Adrenal gland (tissue), 19 donors: ENCODE measurements at regions of chr11 and their contacts with region 1.

Region 1: GRCh38 chr11:36265793-36266628 is 23.2 kb downstream of the COMMD9 start:
- DNase-seq: peak; percentile 36 to 80 (median 53)
- H3K4me3 ChIP-seq: no peak overlapping the region
- H3K27ac ChIP-seq: no peak overlapping the region
- H3K4me1 ChIP-seq: no peaks in the 10 kb centered on the region
- H3K27me3 ChIP-seq: no peaks in the 10 kb centered on the region
- CTCF ChIP-seq: peak; percentile 77 to 90 (median 86)
- POLR2A ChIP-seq: no peak

Region 2: DNA sequence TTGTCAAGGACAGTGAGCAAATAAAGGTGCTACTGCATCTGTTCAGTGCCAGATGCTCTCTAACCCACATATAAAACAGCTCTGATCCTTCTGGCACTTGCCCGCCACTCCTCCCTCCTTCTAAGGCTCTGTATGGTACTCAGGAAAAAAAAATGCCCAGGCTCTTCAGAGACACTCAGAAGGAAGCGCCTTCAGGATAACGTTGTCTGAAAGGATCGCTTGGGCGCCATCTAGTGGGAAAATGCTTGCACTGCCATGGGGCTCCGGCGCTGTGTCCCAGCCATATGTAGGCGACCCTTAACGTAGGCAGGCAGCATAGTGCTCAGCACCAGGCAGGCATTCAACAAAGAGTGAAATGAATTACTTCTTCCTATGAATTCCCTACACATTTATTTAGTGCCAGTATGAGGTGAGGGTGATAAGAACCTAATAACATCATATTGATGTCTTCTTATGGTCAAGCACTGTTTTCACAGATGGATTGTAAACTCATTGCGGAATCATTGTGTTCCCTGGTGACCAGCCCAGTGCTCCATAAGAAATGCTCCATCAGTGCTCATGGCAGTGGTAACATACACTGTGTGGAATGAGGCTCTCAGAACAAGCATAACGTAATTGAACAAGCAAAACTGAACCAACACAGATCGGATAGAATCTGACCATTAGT is 780.2 kb before region 1 on chr11:
- intact Hi-C with region 1: loop called in 1 of 2 experiments (anchors 10 kb)
- DNase-seq: peak; percentile 61 to 92 (median 80)
- H3K4me3 ChIP-seq: no peak overlapping the region
- H3K27ac ChIP-seq: no peak overlapping the region
- H3K4me1 ChIP-seq: no peaks in the 10 kb centered on the region
- H3K27me3 ChIP-seq: no peaks in the 10 kb centered on the region
- CTCF ChIP-seq: peak; percentile 73 to 93 (median 82)
- POLR2A ChIP-seq: no peak

Region 3: DNA sequence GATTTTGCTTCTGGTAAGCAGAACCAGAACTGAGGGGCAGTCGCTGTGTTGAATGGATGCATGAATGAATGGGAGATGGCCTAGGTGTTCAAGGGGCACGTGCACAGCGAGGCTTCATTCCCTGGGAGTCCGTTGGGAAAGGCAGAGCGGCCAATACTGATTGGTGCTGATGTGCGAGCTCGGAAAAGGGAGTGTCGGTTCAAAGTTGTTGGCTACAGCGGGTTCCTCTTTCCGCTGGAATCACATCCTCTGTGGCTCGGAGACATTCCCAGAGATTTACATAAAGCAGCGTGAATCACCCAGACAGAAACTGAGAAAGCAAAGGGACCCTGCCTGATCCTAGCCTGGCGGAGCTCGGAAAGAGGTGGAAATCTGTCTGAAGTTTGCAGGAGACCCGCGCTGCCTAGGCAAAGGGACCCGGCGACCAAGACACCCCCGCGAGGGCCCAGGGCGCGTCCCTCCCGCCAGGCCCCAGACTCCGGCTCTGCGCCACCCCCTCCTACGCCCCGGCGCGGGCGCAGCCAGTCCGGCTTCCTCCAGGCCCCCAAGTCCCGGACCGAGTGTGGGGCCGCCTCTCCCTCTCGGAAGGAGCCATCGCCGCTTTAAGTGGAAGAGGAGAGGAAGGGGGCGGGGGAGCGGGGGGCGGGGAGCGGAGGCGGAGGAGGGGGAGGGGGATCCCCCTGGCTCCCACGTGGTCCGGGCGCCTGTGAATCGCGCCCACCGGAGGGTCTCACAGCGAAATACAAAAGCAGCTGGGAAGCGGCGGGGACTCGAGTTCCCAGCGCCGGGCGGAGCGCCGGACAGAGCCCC is 648.1 kb before region 1 on chr11 and contains the start of gene FJX1:
- intact Hi-C with region 1: loop called (anchors 2 to 10 kb)
- DNase-seq: peak; percentile 55 to 71 (median 57)
- H3K4me3 ChIP-seq: peak within 1 kb of the TSS in 2 of 4 donors; percentile 39 to 78
- H3K27ac ChIP-seq: peak within 1 kb of the TSS in 4 of 5 donors; percentile 70 to 93 (median 78)
- H3K4me1 ChIP-seq: peaks cover 17 to 24% of the 10 kb centered on the region in 2 donors
- H3K27me3 ChIP-seq: no peaks in the 10 kb centered on the region
- CTCF ChIP-seq: no peak
- POLR2A ChIP-seq: peak in 1 of 2 donors; percentile 38
- total RNA-seq, gene FJX1: 4.3 to 37.1 (median 10.4) TPM

Region 4: DNA sequence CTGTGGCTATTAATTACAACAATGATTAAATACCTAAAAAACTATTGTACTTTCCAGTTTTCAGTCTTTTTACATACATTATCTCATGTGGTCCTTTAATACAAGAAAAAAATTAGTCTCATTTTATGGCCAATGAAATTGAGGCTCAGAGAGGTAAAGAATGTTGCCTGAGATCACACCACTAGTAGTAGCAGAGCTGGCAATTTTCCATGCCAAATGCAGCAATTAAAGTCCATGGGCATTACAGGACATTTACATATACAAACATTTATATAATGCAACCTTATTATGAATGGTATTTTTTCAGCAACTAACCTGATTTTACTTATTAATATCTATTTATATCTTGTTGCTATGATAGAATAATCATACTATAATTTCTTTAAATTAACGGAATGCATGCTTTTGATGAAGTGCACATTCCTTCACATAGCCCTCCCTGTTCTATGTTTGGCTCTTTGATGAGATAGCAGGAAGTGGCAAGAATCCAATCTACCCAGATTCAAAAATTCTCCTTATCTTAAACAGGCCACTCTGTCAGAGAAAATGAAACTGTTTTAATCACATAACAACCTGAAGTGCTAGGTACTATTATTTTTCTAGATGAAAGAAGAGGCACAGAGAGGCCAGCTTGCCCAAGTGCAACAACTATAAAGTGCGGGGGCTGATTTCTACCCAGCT is 443.1 kb before region 1 on chr11:
- intact Hi-C with region 1: loop called in 1 of 2 experiments (anchors 5 kb)
- DNase-seq: no peak
- H3K4me3 ChIP-seq: no peak overlapping the region
- H3K27ac ChIP-seq: no peak overlapping the region
- H3K4me1 ChIP-seq: peaks cover 0 to 21% of the 10 kb centered on the region in 2 donors
- H3K27me3 ChIP-seq: no peaks in the 10 kb centered on the region
- CTCF ChIP-seq: no peak
- POLR2A ChIP-seq: no peak

Region 5: DNA sequence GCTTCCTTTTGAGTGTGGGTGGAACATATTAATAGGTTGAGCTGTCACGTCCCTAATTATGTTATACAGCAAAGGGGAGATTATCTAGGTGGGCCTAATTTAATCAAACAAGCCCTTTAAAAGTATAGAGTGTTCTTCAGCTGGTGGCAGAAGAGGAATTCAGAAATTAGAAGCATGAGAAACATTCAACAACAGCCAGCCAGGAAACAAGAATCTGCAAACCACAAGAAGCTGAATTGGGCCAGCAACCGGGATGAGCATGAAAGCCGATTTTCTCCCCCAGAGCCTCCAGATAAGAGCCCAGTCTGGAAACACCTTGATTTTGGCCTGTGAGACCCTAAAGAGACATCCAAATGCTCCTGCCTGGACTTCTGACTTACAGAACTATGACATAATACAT is 427.9 kb before region 1 on chr11:
- intact Hi-C with region 1: loop called in 1 of 2 experiments (anchors 10 kb)
- DNase-seq: no peak
- H3K4me3 ChIP-seq: no peak overlapping the region
- H3K27ac ChIP-seq: no peak overlapping the region
- H3K4me1 ChIP-seq: no peaks in the 10 kb centered on the region
- H3K27me3 ChIP-seq: no peaks in the 10 kb centered on the region
- CTCF ChIP-seq: no peak
- POLR2A ChIP-seq: no peak

Region 6: DNA sequence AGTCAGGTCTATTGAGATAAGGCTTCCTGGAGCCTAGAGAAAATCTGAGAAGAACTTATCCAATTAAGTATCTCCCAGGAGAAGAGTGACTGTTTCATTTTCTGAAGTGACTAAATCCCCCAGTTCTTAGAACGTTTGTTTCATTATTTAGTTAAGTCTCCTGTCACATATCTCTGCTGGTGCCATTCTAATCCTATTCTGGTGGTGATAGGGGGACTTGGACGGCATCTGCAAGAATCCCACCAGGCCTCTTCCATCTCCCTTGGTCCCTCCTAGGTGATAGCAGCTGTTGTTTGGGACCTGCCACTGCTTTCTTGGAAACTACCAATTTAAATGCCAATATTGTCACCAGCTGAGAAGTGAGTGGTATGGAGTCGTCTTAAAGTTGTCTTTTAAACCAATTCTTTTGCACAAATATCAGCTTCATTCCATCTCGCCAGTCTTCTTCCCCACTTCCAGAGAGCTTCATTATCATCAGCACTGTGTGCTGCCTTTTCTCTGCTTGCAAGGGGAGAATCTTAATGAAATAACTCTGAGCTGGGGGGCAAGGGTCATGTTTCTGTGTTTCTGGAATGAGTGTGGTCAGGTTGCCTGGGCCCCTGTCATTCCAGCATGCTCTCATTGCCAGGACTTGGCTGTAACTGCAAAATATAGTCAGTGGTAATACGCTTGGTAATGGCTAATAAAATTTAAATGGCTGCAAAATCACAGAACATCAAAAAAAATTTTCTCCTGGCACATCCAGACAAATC is 217.3 kb before region 1 on chr11:
- intact Hi-C with region 1: loop called in 1 of 2 experiments (anchors 5 kb)
- DNase-seq: no peak
- H3K4me3 ChIP-seq: no peak overlapping the region
- H3K27ac ChIP-seq: no peak overlapping the region
- H3K4me1 ChIP-seq: no peaks in the 10 kb centered on the region
- H3K27me3 ChIP-seq: no peaks in the 10 kb centered on the region
- CTCF ChIP-seq: no peak
- POLR2A ChIP-seq: no peak

Region 7: GRCh38 chr11:36156161-36156816 is 109.7 kb before region 1 on chr11:
- intact Hi-C with region 1: loop called in 1 of 2 experiments (anchors 5 kb)
- DNase-seq: no peak
- H3K4me3 ChIP-seq: no peak overlapping the region
- H3K27ac ChIP-seq: peak overlapping the region in 2 of 5 donors; percentile 42 to 50
- H3K4me1 ChIP-seq: peaks cover 14 to 36% of the 10 kb centered on the region in 2 donors
- H3K27me3 ChIP-seq: no peaks in the 10 kb centered on the region
- CTCF ChIP-seq: no peak
- POLR2A ChIP-seq: no peak

Region 8: GRCh38 chr11:36411202-36411640 is 145.2 kb after region 1 on chr11:
- intact Hi-C with region 1: no loop called
- DNase-seq: peak in 6 of 7 donors; percentile 30 to 68 (median 46)
- H3K4me3 ChIP-seq: no peak overlapping the region
- H3K27ac ChIP-seq: peak overlapping the region in 2 of 5 donors; percentile 30 to 86
- H3K4me1 ChIP-seq: peaks cover 6 to 7% of the 10 kb centered on the region in 2 donors
- H3K27me3 ChIP-seq: no peaks in the 10 kb centered on the region
- CTCF ChIP-seq: no peak
- POLR2A ChIP-seq: no peak